Gastrocnemius medialis (tissue), 4 donors: ENCODE measurements at regions of chr2 and their contacts with region 1.

Region 1: GRCh38 chr2:32946314-32947075 is at the start of gene LTBP1:
- DNase-seq: peak; percentile 54 to 61
- ATAC-seq: peak; percentile 82 to 84
- H3K4me3 ChIP-seq: peak within 1 kb of the TSS; percentile 71 to 83 (median 74)
- H3K27ac ChIP-seq: peak within 1 kb of the TSS; percentile 75 to 79 (median 78)
- H3K4me1 ChIP-seq: no peaks in the 10 kb centered on the region
- H3K27me3 ChIP-seq: no peaks in the 10 kb centered on the region
- CTCF ChIP-seq: peak; percentile 48 to 85 (median 65)
- POLR2A ChIP-seq: peak; percentile 62 to 74
- total RNA-seq, gene LTBP1: 8.0 to 42.8 (median 18.4) TPM

Region 2: DNA sequence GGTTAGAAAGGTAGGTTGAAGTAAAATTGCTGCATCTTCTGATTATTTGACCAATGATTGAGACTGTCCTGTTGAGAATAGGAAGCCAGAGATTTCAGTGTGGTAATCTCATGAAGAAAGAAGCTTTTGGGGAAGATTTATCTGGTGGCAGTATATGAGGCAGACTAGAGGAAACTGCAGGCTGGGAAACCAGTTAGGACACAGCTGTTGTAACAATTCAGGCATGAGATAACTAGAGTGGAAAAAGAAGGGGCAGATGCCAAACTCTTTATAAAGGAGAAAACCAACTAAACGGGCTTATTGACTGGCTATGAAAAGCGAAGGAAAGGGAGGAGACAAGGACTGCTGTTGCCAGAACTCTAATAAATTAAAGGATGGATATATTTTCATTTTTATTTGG is 163.0 kb before region 1 on chr2:
- in situ Hi-C with region 1: loop called in 2 of 4 experiments (anchors 10 kb)
- intact Hi-C with region 1: no loop called
- DNase-seq: no peak
- ATAC-seq: no peak
- H3K4me3 ChIP-seq: no peak overlapping the region
- H3K27ac ChIP-seq: peak overlapping the region in 3 of 4 donors; percentile 7 to 46 (median 24)
- H3K4me1 ChIP-seq: peaks cover 22 to 29% of the 10 kb centered on the region in 2 donors
- H3K27me3 ChIP-seq: no peaks in the 10 kb centered on the region
- CTCF ChIP-seq: no peak
- POLR2A ChIP-seq: no peak

Region 3: DNA sequence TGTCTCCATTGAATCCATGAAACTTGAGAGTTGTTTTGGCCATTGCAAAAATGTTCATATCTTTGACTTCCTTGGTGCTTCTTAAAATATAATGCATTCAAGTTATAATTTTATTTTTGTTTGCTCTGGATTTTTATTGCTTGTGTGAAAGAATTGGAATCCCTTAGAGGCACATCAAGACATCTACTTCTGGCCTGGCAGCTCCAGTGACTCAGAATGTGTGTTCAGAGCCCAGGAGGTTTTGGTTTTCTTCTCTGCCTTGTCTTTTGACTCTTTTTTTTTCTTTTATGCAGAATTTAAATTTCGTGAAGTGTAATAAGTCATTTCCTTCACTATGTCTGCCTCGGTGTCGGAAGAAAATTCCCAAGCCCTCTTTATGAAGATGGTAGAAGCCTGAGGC is 180.5 kb after region 1 on chr2:
- in situ Hi-C with region 1: no loop called
- intact Hi-C with region 1: no loop called
- DNase-seq: no peak
- ATAC-seq: no peak
- H3K4me3 ChIP-seq: no peak overlapping the region
- H3K27ac ChIP-seq: peak overlapping the region in 1 of 4 donors; percentile 20
- H3K4me1 ChIP-seq: no peaks in the 10 kb centered on the region
- H3K27me3 ChIP-seq: no peaks in the 10 kb centered on the region
- CTCF ChIP-seq: no peak
- POLR2A ChIP-seq: no peak

Region 4: DNA sequence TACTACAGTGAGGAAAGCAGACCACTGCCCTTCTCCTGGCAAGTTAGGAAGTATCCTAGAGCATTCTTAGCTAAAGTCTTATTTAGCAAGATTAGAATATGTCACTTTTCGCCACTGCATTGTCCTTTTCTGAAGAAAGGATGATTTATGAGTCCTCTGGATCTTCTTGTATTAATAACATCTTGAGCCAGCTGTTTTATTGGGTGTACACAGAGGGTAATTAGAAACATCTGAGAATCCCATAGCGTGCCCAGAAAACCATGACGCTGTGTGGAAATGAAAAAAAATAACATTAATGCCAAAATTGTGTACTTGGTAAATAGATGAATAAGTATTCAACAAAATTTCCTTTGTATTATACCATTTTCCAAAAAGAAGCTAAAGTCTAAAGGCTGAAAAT is 199.0 kb after region 1 on chr2:
- in situ Hi-C with region 1: no loop called
- intact Hi-C with region 1: no loop called
- DNase-seq: no peak
- ATAC-seq: no peak
- H3K4me3 ChIP-seq: no peak overlapping the region
- H3K27ac ChIP-seq: peak overlapping the region; percentile 19 to 53 (median 34)
- H3K4me1 ChIP-seq: peaks cover 31 to 34% of the 10 kb centered on the region in 2 donors
- H3K27me3 ChIP-seq: no peaks in the 10 kb centered on the region
- CTCF ChIP-seq: no peak
- POLR2A ChIP-seq: no peak